ENCODE measurements at regions of chr14 and their contacts with region 1.

Region 1: DNA sequence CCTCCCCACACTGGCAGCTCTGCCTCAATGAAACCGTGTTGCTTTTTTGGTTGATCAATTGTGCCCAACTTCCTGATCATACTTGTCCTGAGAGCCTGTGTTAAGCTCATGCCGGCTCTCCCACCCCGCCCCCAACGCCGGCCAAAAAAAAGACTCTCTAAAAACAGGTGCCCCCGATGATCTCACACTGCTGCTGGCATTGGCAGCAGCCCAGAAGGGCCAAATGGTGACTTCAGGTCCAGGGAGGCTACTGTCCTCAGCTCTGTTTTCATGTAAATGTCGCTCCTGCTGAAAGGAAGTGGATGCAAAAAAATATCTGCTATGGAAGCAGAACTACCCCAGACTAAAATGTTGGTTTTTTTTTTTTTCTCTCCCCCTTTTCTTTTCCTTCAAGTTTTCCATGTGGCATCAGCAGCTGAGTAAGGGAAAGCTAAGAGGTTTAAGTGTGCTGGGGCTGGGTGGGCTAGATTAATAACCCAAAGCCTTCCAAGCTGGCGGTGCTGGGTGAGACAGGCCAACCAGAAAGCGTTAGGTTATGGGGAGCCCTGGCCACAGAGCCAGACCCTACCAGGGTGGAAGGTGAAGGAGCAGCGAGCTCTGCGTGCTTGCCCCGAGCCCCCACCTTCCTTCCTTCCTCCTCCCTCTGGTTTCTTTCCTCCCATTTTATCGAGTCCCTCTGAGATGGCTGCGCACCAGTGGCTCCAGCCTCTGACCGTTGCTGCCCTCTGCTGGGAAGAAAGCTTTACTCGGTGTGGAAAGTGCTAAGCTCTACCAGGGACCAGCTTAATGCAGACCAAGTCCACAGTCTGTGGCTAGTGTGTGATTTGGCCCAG is 396.1 kb downstream of the NRXN3 start:
- DNase-seq: peak; percentile 57 to 86 (median 76)
- ATAC-seq: peak; percentile 73 to 99 (median 99)
- H3K4me3 ChIP-seq: peak overlapping the region in 1 of 4 donors; percentile 26
- H3K27ac ChIP-seq: no peak overlapping the region
- H3K4me1 ChIP-seq: no peaks in the 10 kb centered on the region
- H3K27me3 ChIP-seq: no peaks in the 10 kb centered on the region
- CTCF ChIP-seq: peak; percentile 56 to 67 (median 62)

Region 2: GRCh38 chr14:78455896-78456435 is 110.3 kb before region 1 on chr14:
- intact Hi-C with region 1: loop called in 2 of 3 experiments (anchors 10 kb)
- DNase-seq: no peak
- ATAC-seq: no peak
- H3K4me3 ChIP-seq: no peak overlapping the region
- H3K27ac ChIP-seq: no peak overlapping the region
- H3K4me1 ChIP-seq: no peaks in the 10 kb centered on the region
- H3K27me3 ChIP-seq: peaks cover 0 to 3% (median 0%) of the 10 kb centered on the region in 4 donors
- CTCF ChIP-seq: no peak